ENCODE measurements at regions of chr2 and their contacts with region 1.

Region 1: GRCh38 chr2:177763532-177764265 is 308.9 kb downstream of the PDE11A start:
- DNase-seq: peak; percentile 61
- H3K4me3 Mint-ChIP-seq: no peak overlapping the region
- H3K27ac Mint-ChIP-seq: no peak overlapping the region
- H3K4me1 Mint-ChIP-seq: no peaks in the 10 kb centered on the region
- H3K27me3 Mint-ChIP-seq: peaks cover 15% of the 10 kb centered on the region

Region 2: DNA sequence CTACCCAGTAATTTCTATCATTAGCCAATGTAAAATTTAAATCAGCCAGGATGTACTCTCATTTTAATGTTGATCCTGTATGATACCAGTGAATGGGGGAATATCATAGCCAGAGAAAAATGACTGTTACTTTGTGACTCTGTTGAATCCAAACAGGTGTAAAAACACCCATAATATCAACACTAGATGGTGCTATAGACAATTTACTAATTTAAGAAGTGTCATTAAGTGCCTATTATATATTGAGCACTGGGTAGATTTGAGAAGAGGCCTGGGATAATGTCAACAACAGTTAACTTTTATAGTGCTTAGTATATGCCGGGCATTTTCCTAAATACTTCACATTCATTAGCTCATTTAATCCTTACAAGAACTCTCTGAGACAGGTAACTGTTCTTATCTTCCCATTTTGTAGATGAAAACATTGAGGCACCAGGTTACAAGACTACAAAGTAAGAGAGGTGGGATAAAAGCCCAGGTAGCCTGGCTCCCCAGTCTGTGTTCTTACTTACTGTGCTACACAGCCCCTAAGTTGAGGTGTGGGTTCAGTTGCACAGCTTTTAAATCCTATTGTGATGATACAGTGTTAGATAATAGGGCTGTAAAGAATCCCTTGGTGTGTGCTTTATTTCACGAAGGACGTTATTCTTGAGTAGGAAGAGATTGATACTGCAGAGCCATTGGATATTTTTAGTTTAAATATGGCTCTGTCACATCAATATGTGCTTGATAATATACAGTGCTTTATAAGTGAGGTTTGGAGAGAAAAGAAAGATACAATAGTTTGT is 45.7 kb before region 1 on chr2:
- intact Hi-C with region 1: loop called (anchors 5 kb)
- DNase-seq: no peak
- H3K4me3 Mint-ChIP-seq: no peak overlapping the region
- H3K27ac Mint-ChIP-seq: no peak overlapping the region
- H3K4me1 Mint-ChIP-seq: no peaks in the 10 kb centered on the region
- H3K27me3 Mint-ChIP-seq: peaks cover 2% of the 10 kb centered on the region